Activated CD4-positive, alpha-beta T cell treated with anti-CD3 and anti-CD28 coated beads, Interleukin-2, amount 10 ng/mL, durations not matched to agents 7 days and 5 days (primary cell): ENCODE measurements at regions of chr17 and their contacts with region 1.

Region 1: DNA sequence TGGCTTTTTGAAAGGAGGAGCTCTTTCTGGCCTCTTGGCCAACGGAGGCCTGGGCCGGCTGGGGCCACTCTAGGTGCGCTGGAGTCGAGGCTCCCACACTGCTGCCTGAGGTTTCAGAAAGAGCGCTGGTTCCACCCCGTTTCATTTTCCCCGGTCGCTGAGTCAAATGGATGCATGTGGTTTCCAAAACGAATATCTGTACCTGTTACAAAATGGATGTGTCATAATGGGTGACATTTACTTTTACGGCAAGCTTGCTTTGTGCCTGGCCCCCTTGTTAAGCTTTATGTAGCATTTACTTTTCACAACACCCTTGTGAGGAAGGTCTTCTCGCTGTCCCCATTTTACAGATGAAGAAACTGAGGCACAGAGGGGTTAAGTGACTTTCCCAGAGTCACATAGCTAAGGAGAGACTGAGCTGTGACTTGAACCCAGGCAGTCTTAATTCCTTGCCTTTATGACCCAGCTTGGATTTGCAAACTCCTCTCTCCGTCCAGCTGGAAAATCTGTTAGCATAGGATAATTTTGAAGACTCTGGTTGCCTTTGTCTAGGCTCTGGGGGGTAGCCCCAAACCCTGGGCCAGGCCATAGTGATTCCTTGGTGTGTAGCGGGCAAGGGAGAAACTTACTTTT is 10.6 kb downstream of the KSR1 start:
- DNase-seq: peak; percentile 81
- H3K4me3 Mint-ChIP-seq: peak overlapping the region; percentile 67
- H3K27ac Mint-ChIP-seq: peak overlapping the region; percentile 97
- H3K4me1 Mint-ChIP-seq: peaks cover 89% of the 10 kb centered on the region
- H3K27me3 Mint-ChIP-seq: no peaks in the 10 kb centered on the region

Region 2: DNA sequence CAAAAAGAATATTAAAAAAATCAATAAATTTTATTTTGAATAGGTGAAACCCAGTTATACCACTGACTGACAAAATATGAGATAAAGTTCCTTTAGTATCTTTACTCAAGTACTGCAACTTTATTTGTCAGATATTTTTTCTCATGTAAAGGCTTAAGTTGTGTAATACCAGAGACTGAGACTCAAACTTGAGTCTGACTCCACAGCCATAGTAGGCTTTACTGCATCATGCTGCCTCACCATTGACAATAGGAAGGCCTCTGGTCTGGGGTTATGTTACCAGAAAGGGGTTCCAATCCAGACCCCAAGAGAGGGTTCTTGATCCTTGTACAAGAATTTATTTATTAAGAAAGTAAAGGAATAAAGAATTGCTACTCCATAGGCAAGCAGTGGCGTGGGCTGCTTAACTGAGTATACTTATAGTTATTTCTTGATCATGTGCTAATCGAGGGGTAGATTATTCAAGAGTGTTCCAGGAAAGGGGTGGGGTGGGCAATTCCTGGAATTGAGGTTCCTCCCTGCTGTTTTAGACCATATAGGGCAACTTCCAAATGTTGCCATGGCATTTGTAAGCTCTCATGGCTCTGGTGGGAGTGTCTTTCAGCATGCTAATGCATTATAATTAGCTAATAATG is 360.4 kb before region 1 on chr17:
- CTCF ChIA-PET with region 1: no interaction called
- POLR2A ChIA-PET with region 1: no interaction called
- DNase-seq: no peak
- H3K4me3 Mint-ChIP-seq: no peak overlapping the region
- H3K27ac Mint-ChIP-seq: no peak overlapping the region
- H3K4me1 Mint-ChIP-seq: no peaks in the 10 kb centered on the region
- H3K27me3 Mint-ChIP-seq: peaks cover 2% of the 10 kb centered on the region

Region 3: GRCh38 chr17:27430882-27431491 is 35.9 kb before region 1 on chr17:
- CTCF ChIA-PET with region 1: no interaction called
- POLR2A ChIA-PET with region 1: no interaction called
- DNase-seq: no peak
- H3K4me3 Mint-ChIP-seq: no peak overlapping the region
- H3K27ac Mint-ChIP-seq: no peak overlapping the region
- H3K4me1 Mint-ChIP-seq: no peaks in the 10 kb centered on the region
- H3K27me3 Mint-ChIP-seq: peaks cover 3% of the 10 kb centered on the region

Region 4: DNA sequence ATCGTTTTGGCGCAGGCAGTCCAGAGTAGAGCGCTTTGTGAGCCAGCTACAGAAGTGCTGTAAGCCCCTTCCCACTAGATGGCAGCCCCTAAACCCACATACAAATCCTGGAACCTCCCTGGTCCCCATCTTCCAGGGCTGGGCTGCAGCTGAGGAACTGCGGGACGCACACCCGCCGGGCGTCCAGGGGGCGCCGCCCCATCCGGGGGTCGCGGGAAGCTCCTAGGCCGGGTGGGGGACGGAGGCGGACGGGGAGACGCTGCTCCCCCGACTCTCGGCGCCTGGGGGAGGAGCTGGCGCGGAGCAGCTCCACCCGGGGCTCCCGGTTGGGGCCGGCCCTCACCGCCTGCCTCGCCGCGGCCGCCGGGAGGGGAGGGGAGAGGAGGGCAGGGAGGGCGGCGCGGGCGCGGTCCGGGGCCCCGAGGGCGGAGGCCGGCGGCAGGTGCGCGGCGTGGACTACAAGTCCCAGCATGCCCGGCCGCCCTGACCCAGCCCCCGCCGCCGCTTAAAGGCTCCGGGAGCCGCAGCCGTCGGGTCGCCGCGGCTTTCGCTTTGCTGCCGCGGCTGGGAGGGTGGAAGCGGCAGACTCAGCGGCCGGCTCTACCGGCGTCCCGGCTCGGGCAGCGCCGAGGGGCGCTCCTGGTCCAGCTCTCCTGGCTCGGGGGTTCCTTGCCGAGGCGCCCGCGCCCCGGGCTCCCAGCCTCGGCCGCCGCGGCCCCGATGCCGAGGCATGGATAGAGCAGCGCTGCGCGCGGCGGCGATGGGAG is 10.8 kb before region 1 on chr17 and contains the start of gene KSR1:
- CTCF ChIA-PET with region 1: interaction called, 11 read pairs
- POLR2A ChIA-PET with region 1: interaction called, 3 read pairs
- DNase-seq: peak; percentile 85
- H3K4me3 Mint-ChIP-seq: peak within 1 kb of the TSS; percentile 87
- H3K27ac Mint-ChIP-seq: peak within 1 kb of the TSS; percentile 90
- H3K4me1 Mint-ChIP-seq: peaks cover 49% of the 10 kb centered on the region
- H3K27me3 Mint-ChIP-seq: peaks cover 2% of the 10 kb centered on the region
- total RNA-seq, gene KSR1: 43.1 to 45.7 TPM

Region 5: GRCh38 chr17:27824745-27825144 is 357.9 kb after region 1 on chr17:
- CTCF ChIA-PET with region 1: no interaction called
- POLR2A ChIA-PET with region 1: no interaction called
- DNase-seq: no peak
- H3K4me3 Mint-ChIP-seq: no peak overlapping the region
- H3K27ac Mint-ChIP-seq: no peak overlapping the region
- H3K4me1 Mint-ChIP-seq: no peaks in the 10 kb centered on the region
- H3K27me3 Mint-ChIP-seq: peaks cover 19% of the 10 kb centered on the region